Panc1 (cell line): ENCODE measurements at regions of chr14 and their contacts with region 1.

Region 1: GRCh38 chr14:34300882-34301734 is 160.9 kb downstream of the SPTSSA start:
- DNase-seq: no peak
- ATAC-seq: 0 out of 2 replicates have a peak, but pooled peaks have one; percentile 63
- H3K4me3 ChIP-seq: no peak overlapping the region
- H3K27ac ChIP-seq: no peak overlapping the region
- H3K4me1 ChIP-seq: no peaks in the 10 kb centered on the region
- H3K27me3 ChIP-seq: no peaks in the 10 kb centered on the region
- CTCF ChIP-seq: peak; percentile 67

Region 2: GRCh38 chr14:33839193-33840076 is 461.7 kb before region 1 on chr14:
- CTCF ChIA-PET with region 1: no interaction called
- POLR2A ChIA-PET with region 1: no interaction called
- in situ Hi-C with region 1: no loop called
- intact Hi-C with region 1: loop called (anchors 1 kb)
- DNase-seq: peak; percentile 13
- ATAC-seq: no peak; the same call in 1 of the 2 replicates
- H3K4me3 ChIP-seq: no peak overlapping the region
- H3K27ac ChIP-seq: no peak overlapping the region
- H3K4me1 ChIP-seq: no peaks in the 10 kb centered on the region
- H3K27me3 ChIP-seq: no peaks in the 10 kb centered on the region
- CTCF ChIP-seq: peak; percentile 77

Region 3: DNA sequence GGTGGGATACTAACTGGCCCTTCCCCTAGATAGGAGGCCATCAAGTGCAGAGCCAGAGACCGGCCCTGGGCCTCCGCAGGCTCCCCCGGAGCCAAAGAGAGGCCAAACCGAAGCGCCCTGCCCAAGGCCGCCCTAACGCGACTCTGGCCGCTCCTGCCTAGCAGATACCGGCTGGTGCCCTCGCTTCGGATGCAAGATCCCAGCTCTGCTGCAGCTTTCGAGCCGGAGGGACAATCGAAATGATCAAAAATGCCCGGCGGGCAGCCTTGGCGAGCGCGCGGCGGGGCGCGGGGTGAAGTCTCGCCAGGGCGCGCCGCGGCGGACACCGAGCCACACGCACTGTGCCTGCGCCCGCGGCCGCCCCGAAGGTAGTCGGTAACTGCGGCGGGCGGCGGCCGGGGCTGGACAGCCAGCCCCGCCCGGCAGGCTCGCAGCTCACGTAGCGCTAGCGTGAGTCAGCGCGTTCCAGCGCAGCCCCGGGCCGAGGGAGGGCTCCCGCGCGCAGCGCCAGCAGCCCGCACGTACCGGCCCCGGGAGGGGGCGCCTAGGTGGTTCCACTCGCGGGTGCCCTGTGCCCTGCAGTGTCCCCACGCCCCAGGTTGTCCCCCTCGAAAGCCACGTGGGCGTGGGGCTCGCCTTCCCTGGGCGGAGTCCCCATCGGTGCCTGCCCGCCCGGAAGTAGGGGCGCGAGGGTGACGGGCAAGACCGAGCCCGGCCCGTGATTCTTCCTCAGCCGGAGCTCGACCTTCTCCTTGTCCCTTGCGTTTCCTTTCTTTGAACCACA is 241.1 kb before region 1 on chr14:
- CTCF ChIA-PET with region 1: interaction called, 10 read pairs
- POLR2A ChIA-PET with region 1: no interaction called
- in situ Hi-C with region 1: no loop called
- intact Hi-C with region 1: no loop called
- DNase-seq: no peak
- ATAC-seq: peak; percentile 97
- H3K4me3 ChIP-seq: peak overlapping the region; percentile 50 to 60
- H3K27ac ChIP-seq: peak overlapping the region; percentile 83
- H3K4me1 ChIP-seq: peaks cover 5% of the 10 kb centered on the region
- H3K27me3 ChIP-seq: no peaks in the 10 kb centered on the region
- CTCF ChIP-seq: peak; percentile 29

Region 4: DNA sequence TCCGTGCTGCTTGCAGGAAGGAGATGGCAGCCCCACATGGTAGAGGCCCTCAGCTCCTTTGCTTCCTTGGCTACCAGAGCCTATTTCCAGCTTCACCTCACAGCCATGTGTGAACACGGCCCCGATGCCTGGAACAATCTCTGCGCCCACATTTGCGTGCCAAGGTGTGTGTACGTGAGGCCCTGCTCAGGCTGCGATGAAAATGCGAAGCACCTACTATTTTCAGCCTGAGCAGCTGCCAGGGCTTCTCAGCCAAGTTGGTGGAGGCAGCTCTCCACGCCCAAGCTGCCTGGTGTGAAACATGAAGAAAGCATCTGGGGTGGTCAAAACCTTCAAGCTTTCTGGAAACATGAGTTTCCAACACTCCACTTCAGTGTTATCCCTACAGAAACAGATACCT is 172.4 kb before region 1 on chr14:
- CTCF ChIA-PET with region 1: interaction called, 14 read pairs
- POLR2A ChIA-PET with region 1: no interaction called
- in situ Hi-C with region 1: no loop called
- intact Hi-C with region 1: no loop called
- DNase-seq: no peak
- ATAC-seq: no peak
- H3K4me3 ChIP-seq: no peak overlapping the region
- H3K27ac ChIP-seq: no peak overlapping the region
- H3K4me1 ChIP-seq: no peaks in the 10 kb centered on the region
- H3K27me3 ChIP-seq: no peaks in the 10 kb centered on the region
- CTCF ChIP-seq: no peak